MCF 10A (cell line): ENCODE measurements at regions of chr3 and their contacts with region 1.

Region 1: DNA sequence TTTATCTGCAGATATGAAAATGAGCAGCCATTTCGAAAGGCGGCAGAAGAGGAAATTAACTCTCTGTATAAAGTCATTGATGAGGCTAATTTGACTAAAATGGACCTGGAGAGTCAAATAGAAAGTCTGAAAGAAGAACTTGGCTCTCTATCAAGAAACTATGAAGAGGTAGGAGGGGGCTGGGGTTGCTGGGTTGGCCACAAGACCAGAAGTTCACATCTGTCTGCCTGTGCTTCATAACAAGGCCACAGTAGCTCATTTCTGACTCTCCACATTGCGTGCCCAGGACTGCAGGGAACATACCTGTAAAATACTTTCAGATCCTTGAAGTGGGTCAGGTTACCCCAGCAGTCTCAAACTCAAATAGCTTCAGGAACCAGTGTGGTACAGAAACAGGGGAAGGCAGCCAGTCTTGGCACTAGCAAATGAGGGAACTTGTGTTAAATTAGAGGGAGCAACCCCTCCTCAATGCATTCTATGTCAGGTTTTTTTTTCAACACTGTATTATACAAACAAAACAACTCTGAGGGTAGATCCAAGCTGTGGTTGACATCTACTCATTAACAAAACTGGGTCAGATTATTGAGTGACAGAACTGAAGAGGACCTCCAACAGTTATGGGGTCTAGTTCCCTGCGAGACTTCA is 48.7 kb downstream of the BFSP2 start:
- DNase-seq: no peak
- H3K4me3 Mint-ChIP-seq: no peak overlapping the region
- H3K27ac Mint-ChIP-seq: no peak overlapping the region
- H3K4me1 Mint-ChIP-seq: peaks cover 12% of the 10 kb centered on the region
- H3K27me3 Mint-ChIP-seq: peaks cover 12% of the 10 kb centered on the region
- CTCF ChIP-seq: no peak

Region 2: GRCh38 chr3:133805527-133806475 is 357.2 kb after region 1 on chr3 and contains the start of gene SRPRB:
- CTCF ChIA-PET with region 1: no interaction called
- POLR2A ChIA-PET with region 1: no interaction called
- intact Hi-C with region 1: loop called (anchors 10 kb)
- DNase-seq: peak; percentile 96
- H3K4me3 Mint-ChIP-seq: peak within 1 kb of the TSS; percentile 85
- H3K27ac Mint-ChIP-seq: peak within 1 kb of the TSS; percentile 30
- H3K4me1 Mint-ChIP-seq: peaks cover 8% of the 10 kb centered on the region
- H3K27me3 Mint-ChIP-seq: no peaks in the 10 kb centered on the region
- CTCF ChIP-seq: no peak
- total RNA-seq, gene SRPRB: 180 and 212 TPM in 2 replicates